H1 (cell line): ENCODE measurements at regions of chr4 and their contacts with region 1.

Region 1: DNA sequence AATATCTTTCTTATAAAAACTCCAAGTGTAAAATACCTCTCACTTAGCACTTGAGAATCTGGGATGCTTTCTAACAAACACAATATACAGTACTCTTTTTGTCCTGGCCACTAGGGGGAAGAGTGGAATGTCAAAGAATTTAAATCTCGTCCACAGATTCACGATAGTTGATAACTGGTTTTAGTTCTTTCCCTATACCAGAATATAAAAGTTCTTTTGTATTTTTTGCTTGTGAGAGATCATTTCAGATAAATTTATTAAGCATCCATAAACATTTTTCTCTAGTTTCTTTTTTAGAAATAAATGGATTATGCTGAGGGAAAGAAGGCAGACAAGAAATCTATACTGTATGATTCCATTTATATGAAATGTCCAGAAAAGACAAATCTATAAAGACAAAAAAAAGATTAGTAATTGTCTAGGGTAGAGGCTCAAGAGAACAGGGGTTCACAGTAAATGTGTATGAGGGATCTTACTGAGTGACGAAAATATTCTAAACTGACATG is 50.4 kb downstream of the MGARP start:
- DNase-seq: no peak
- H3K4me3 ChIP-seq: no peak overlapping the region
- H3K27ac ChIP-seq: no peak overlapping the region
- H3K4me1 ChIP-seq: peaks cover 0 to 7% (median 2%) of the 10 kb centered on the region in 4 experiments; a peak in 3 of 7 replicates
- H3K27me3 ChIP-seq: no peaks in the 10 kb centered on the region
- CTCF ChIP-seq: peak in 2 of 3 experiments; percentile 16 to 60; a peak in 2 of 4 replicates
- EP300 ChIP-seq: no peak
- POLR2A ChIP-seq: no peak
- RAD21 ChIP-seq: peak; percentile 48 to 59

Region 2: GRCh38 chr4:138800421-138800820 is 429.2 kb before region 1 on chr4:
- CTCF ChIA-PET with region 1: no interaction called
- POLR2A ChIA-PET with region 1: no interaction called
- DNase-seq: no peak
- H3K4me3 ChIP-seq: no peak overlapping the region
- H3K27ac ChIP-seq: no peak overlapping the region
- H3K4me1 ChIP-seq: no peaks in the 10 kb centered on the region
- H3K27me3 ChIP-seq: peaks cover 0 to 1% (median 0%) of the 10 kb centered on the region in 4 experiments; a peak in 1 of 7 replicates
- CTCF ChIP-seq: no peak
- EP300 ChIP-seq: no peak
- POLR2A ChIP-seq: no peak
- RAD21 ChIP-seq: no peak

Region 3: GRCh38 chr4:139219450-139220055 is 10.0 kb before region 1 on chr4:
- CTCF ChIA-PET with region 1: interaction called, 16 read pairs
- POLR2A ChIA-PET with region 1: interaction called, 3 read pairs
- DNase-seq: no peak
- H3K4me3 ChIP-seq: no peak overlapping the region
- H3K27ac ChIP-seq: no peak overlapping the region
- H3K4me1 ChIP-seq: no peaks in the 10 kb centered on the region
- H3K27me3 ChIP-seq: no peaks in the 10 kb centered on the region
- CTCF ChIP-seq: no peak
- EP300 ChIP-seq: no peak
- POLR2A ChIP-seq: no peak
- RAD21 ChIP-seq: no peak